PC-3 (cell line): ENCODE measurements at regions of chr12 and their contacts with region 1.

Region 1: GRCh38 chr12:91178139-91178561 is 4.5 kb downstream of the DCN start:
- DNase-seq: peak; percentile 44
- ATAC-seq: peak; percentile 75
- H3K4me3 ChIP-seq: peak overlapping the region; percentile 58
- H3K27ac ChIP-seq: no peak overlapping the region
- H3K4me1 ChIP-seq: no peaks in the 10 kb centered on the region
- H3K27me3 ChIP-seq: peaks cover 3% of the 10 kb centered on the region; the same call in 1 of the 2 replicates
- CTCF ChIP-seq: peak; percentile 72

Region 2: GRCh38 chr12:90978117-90978770 is 199.9 kb before region 1 on chr12:
- CTCF ChIA-PET with region 1: no interaction called
- POLR2A ChIA-PET with region 1: no interaction called
- intact Hi-C with region 1: loop called (anchors 5 kb)
- DNase-seq: peak; percentile 81
- ATAC-seq: peak; percentile 83
- H3K4me3 ChIP-seq: no peak overlapping the region
- H3K27ac ChIP-seq: no peak overlapping the region
- H3K4me1 ChIP-seq: peaks cover 27% of the 10 kb centered on the region
- H3K27me3 ChIP-seq: no peaks in the 10 kb centered on the region
- CTCF ChIP-seq: peak; percentile 90

Region 3: DNA sequence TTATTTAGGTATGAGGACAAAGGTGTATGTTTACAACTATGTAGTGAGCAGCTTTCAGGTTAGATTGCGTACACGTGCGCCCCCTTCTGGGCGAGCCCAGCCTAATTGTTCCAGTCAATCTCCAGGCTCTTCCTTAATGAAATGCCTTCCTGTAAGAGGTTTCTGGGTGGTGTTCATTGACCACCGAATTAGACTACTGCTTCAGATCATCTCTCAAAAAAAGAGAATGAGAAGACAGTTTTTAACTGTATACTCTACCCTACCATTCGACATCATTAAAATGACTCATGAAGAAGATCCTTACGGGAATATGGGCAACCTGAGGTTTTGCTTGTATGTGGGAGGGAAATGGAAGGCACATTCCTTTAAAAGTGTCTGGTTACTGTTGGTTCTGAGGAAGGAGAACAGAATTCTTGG is 69.0 kb before region 1 on chr12:
- CTCF ChIA-PET with region 1: interaction called, 4 read pairs
- POLR2A ChIA-PET with region 1: no interaction called
- intact Hi-C with region 1: loop called (anchors 5 kb)
- DNase-seq: peak; percentile 83
- ATAC-seq: peak; percentile 95
- H3K4me3 ChIP-seq: peak overlapping the region; percentile 3; the same call in 1 of the 2 replicates
- H3K27ac ChIP-seq: no peak overlapping the region
- H3K4me1 ChIP-seq: peaks cover 9% of the 10 kb centered on the region
- H3K27me3 ChIP-seq: no peaks in the 10 kb centered on the region
- CTCF ChIP-seq: peak; percentile 90

Region 4: GRCh38 chr12:91239481-91239880 is 61.3 kb after region 1 on chr12:
- CTCF ChIA-PET with region 1: no interaction called
- POLR2A ChIA-PET with region 1: no interaction called
- intact Hi-C with region 1: loop called (anchors 5 kb)
- DNase-seq: no peak
- ATAC-seq: no peak
- H3K4me3 ChIP-seq: no peak overlapping the region
- H3K27ac ChIP-seq: no peak overlapping the region
- H3K4me1 ChIP-seq: no peaks in the 10 kb centered on the region
- H3K27me3 ChIP-seq: peaks cover 11% of the 10 kb centered on the region; the same call in 1 of the 2 replicates
- CTCF ChIP-seq: no peak

Region 5: DNA sequence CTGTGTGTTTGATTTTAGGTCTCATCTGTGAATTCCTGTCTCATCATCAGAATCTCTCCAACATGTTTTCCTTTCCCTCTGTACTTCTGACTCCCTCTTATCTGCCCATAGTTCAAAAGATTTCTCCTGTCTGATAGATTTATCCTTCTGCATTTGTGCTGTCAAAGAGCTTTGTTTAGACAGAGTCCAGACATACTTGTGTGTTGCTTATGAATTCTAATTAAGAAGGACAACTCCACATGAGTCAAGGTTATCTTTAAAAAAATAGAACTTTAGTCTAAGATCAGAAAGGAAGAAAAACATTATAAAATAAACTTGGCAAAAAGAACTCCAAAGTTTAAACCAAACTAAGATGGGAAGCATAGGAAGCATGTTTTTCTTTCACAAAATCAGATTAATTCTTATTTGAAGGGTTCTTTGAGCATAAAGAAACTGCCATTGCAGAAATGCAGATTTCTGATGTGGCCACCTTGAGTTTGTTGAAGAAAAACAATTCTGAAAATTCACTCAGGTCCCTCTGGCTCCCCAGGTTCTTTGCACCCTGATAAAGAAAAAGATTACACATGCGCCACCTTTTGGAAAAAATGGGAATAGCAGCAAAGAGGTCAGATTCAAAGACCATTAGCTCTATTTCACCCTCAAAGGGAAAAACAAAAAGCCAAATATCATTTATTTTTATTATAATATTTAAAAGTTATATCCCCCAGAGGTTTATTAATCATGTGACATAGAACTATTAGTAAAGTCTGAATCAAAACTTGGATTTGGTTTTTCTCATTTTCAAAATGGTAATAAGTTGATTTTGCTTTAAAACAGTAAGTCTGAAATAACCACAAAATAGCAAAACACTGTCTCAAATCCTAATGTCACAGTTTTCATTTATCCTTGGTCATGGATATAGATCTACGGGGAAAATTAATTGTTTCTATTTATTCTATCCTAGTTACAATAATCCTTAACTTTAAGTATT is 148.2 kb after region 1 on chr12:
- CTCF ChIA-PET with region 1: interaction called, 16 read pairs
- POLR2A ChIA-PET with region 1: no interaction called
- intact Hi-C with region 1: loop called (anchors 1 kb)
- DNase-seq: peak; percentile 76
- ATAC-seq: no peak
- H3K4me3 ChIP-seq: no peak overlapping the region
- H3K27ac ChIP-seq: no peak overlapping the region
- H3K4me1 ChIP-seq: peaks cover 5% of the 10 kb centered on the region; the same call in 1 of the 2 replicates
- H3K27me3 ChIP-seq: no peaks in the 10 kb centered on the region
- CTCF ChIP-seq: peak; percentile 79

Region 6: DNA sequence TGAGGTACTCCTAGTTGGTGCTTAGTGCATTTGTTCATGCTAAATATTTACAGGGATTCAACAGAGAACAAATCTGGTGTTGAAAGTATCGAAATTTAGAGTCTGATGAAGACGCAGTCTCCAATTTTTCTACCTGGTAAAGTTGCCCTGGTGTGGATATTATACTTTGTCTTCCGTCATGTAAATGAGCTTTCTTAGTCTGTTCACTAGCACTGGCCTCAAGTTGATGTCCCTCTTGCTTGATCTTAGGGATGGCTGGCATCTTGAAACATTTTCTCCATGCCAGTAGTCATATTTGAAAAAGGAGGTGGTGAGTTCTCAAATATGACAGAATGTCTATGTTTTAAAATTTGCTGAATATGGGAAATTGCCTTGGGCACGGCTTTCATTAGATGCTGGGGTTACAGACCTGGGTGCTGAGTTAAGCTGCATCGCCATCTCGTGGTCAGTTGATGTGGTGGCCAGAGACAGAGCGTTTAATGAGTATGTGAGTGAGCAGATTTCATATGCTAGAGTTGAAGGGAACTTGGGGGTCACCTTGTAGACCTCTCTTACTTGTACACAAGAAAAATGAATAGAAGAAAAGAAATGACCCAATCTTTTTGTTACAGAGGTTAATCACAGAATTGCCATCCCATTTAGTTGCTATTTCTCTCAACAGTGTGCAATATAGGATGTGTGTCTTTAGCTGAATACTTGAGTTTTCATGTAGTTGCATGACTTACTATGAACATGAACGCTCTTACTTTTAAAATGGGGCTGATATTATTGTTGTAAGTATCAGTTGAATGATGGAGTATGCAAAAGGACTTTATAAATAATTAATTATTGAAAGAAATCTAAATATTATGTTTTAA is 177.2 kb after region 1 on chr12:
- CTCF ChIA-PET with region 1: no interaction called
- POLR2A ChIA-PET with region 1: no interaction called
- intact Hi-C with region 1: loop called (anchors 1 kb)
- DNase-seq: peak; percentile 82
- ATAC-seq: peak; percentile 92
- H3K4me3 ChIP-seq: no peak overlapping the region
- H3K27ac ChIP-seq: no peak overlapping the region
- H3K4me1 ChIP-seq: no peaks in the 10 kb centered on the region
- H3K27me3 ChIP-seq: no peaks in the 10 kb centered on the region
- CTCF ChIP-seq: peak; percentile 95